ENCODE measurements at regions of chr1 and their contacts with region 1.

Region 1: GRCh38 chr1:153866045-153866850 is 56.5 kb downstream of the GATAD2B start:
- DNase-seq: no peak
- ATAC-seq: no peak
- H3K4me3 ChIP-seq: no peak overlapping the region
- H3K4me3 Mint-ChIP-seq: peak overlapping the region; percentile 11
- H3K27ac ChIP-seq: peak overlapping the region in 1 of 2 donors; percentile 64
- H3K27ac Mint-ChIP-seq: peak overlapping the region; percentile 64
- H3K4me1 ChIP-seq: peaks cover 3 to 8% of the 10 kb centered on the region in 2 donors
- H3K4me1 Mint-ChIP-seq: peaks cover 30% of the 10 kb centered on the region
- H3K27me3 ChIP-seq: no peaks in the 10 kb centered on the region
- H3K27me3 Mint-ChIP-seq: no peaks in the 10 kb centered on the region
- CTCF ChIP-seq: no peak

Region 2: DNA sequence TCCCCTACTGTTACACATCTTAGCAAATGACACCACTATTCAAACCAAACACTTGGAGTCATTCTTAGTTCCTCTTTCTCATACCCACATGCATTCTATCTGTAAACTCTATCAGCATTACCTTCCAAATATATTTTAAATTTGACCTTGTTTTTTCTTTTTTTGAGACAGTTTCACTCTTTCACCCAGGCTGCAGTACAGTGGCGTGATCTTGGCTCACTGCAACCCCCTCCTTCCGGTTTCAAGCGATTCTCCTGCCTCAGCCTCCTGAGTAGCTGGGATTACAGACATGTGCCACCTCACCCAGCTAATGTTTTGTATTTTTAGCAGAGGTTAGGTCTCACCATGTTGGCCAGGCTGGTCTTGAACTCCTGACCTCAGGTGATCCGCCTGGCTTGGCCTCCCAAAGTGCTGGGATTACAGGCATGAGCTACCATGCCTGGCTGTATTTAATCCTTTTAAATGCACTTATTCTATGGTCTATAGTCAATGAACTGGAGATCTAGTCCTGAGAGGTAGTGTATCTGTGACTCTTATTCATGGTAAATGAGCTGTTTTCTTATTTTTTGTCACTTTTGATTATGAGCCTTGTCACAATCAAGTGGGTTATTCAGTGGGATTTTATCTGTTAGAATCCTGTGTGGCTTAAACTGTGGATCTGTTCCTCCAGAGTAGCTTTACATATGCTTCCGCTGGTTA is 16.6 kb before region 1 on chr1:
- CTCF ChIA-PET with region 1: interaction called, 4 read pairs
- POLR2A ChIA-PET with region 1: interaction called, 6 read pairs
- intact Hi-C with region 1: loop called (anchors 2 kb)
- DNase-seq: peak; percentile 55
- ATAC-seq: peak; percentile 81
- H3K4me3 ChIP-seq: no peak overlapping the region
- H3K4me3 Mint-ChIP-seq: peak overlapping the region; percentile 2
- H3K27ac ChIP-seq: peak overlapping the region; percentile 56 to 76
- H3K27ac Mint-ChIP-seq: peak overlapping the region; percentile 46
- H3K4me1 ChIP-seq: peaks cover 46 to 48% of the 10 kb centered on the region in 2 donors
- H3K4me1 Mint-ChIP-seq: peaks cover 52% of the 10 kb centered on the region
- H3K27me3 ChIP-seq: no peaks in the 10 kb centered on the region
- H3K27me3 Mint-ChIP-seq: no peaks in the 10 kb centered on the region
- CTCF ChIP-seq: no peak

Measured in B cell (primary cell).